ENCODE measurements at regions of chr3 and their contacts with region 1.

Region 1: GRCh38 chr3:136752422-136753325 is 496 bp upstream of the STAG1 start:
- DNase-seq: peak; percentile 91
- ATAC-seq: peak; percentile 91
- H3K4me3 ChIP-seq: peak overlapping the region; percentile 65 to 89
- H3K27ac ChIP-seq: peak overlapping the region; percentile 100
- H3K4me1 ChIP-seq: peaks cover 26% of the 10 kb centered on the region
- H3K27me3 ChIP-seq: no peaks in the 10 kb centered on the region
- CTCF ChIP-seq: no peak; the same call in none of the 2 replicates

Region 2: DNA sequence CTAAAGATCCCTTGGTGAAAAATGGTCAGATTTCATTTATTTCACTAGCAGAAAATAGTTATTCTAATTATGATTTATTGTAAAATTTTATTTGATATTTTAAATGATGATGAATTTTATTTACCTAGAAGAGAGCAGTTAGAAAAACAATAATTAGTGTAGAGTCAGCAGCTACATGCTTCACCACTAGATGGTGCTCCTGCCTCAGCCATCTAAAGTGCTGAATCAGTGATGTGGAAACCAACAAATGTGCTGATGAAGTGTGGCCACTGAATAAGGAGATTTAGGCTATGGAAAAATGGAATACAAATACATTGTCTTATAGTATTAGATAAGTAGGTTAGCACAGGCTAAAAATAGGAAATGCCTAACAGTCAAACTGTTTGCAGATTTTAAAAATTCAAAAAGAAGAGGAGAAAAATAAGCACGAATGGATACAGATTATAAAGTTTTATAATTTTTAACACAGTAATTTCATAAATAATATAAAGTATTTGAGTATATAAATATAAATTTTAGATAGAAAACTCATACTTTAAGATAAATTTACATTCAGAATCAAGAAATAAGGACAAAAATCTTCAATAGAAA is 677.4 kb before region 1 on chr3:
- CTCF ChIA-PET with region 1: interaction called, 3 read pairs
- POLR2A ChIA-PET with region 1: no interaction called
- in situ Hi-C with region 1: no loop called
- intact Hi-C with region 1: loop called (anchors 2 kb)
- DNase-seq: peak; percentile 69
- ATAC-seq: peak; percentile 79
- H3K4me3 ChIP-seq: no peak overlapping the region
- H3K27ac ChIP-seq: no peak overlapping the region
- H3K4me1 ChIP-seq: peaks cover 15% of the 10 kb centered on the region
- H3K27me3 ChIP-seq: no peaks in the 10 kb centered on the region
- CTCF ChIP-seq: peak; percentile 90; the same call in 1 of the 2 replicates

Region 3: GRCh38 chr3:136305878-136306277 is 446.8 kb before region 1 on chr3:
- CTCF ChIA-PET with region 1: interaction called, 12 read pairs
- POLR2A ChIA-PET with region 1: no interaction called
- in situ Hi-C with region 1: no loop called
- intact Hi-C with region 1: no loop called
- DNase-seq: peak; percentile 15
- ATAC-seq: no peak; the same call in 1 of the 2 replicates
- H3K4me3 ChIP-seq: no peak overlapping the region
- H3K27ac ChIP-seq: no peak overlapping the region
- H3K4me1 ChIP-seq: no peaks in the 10 kb centered on the region
- H3K27me3 ChIP-seq: no peaks in the 10 kb centered on the region
- CTCF ChIP-seq: no peak

Region 4: DNA sequence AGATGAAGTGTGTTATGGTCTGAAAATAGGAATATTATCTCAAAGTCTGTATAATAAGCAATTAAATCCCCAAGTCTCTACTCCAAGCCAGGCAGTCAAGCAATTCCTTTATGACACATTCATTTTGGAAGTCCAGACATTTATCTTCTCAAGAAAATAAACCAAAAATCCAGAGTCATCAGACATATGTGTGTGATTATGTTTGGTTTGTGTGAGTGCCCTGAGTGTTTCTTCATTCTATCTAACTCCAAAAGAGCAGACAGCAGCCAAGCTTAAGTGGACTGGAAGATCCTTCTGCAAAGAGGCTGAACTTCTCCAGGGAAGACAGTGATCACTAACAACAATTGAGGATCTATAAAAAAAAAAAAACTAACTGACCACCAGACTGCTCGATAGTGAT is 240.3 kb before region 1 on chr3:
- CTCF ChIA-PET with region 1: no interaction called
- POLR2A ChIA-PET with region 1: no interaction called
- in situ Hi-C with region 1: no loop called
- intact Hi-C with region 1: no loop called
- DNase-seq: no peak
- ATAC-seq: no peak
- H3K4me3 ChIP-seq: no peak overlapping the region
- H3K27ac ChIP-seq: no peak overlapping the region
- H3K4me1 ChIP-seq: no peaks in the 10 kb centered on the region
- H3K27me3 ChIP-seq: no peaks in the 10 kb centered on the region
- CTCF ChIP-seq: no peak

Region 5: DNA sequence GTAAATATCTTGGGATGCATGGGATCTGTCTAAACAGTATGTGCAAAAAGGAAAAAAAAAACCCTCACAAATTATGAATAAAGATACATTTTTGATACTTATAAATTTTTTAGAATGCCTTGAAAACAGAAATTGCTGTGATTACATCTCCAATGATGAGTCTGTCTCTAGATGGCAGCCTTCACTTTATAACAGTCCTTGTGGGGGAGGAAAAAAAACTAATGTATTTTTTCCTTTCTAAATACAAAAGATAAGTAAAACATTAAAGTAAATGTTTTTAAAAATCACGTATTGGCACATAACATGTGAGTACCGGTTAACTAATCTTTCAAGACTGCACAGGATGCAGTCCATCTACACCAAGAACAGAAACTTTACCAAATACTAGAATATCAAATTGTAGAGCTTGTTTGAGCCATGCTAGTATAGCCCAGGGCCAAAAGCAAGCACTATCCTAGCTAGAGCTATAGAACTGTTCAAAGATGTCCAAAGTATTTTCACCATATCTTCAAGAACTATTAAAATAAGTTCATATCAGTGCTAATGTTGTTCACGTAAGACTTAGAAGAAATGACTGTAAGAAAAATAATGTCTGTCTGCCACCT is 206.9 kb before region 1 on chr3:
- CTCF ChIA-PET with region 1: interaction called, 6 read pairs
- POLR2A ChIA-PET with region 1: no interaction called
- in situ Hi-C with region 1: no loop called
- intact Hi-C with region 1: loop called (anchors 10 kb)
- DNase-seq: no peak
- ATAC-seq: no peak
- H3K4me3 ChIP-seq: no peak overlapping the region
- H3K27ac ChIP-seq: no peak overlapping the region
- H3K4me1 ChIP-seq: no peaks in the 10 kb centered on the region
- H3K27me3 ChIP-seq: no peaks in the 10 kb centered on the region
- CTCF ChIP-seq: peak; percentile 39; the same call in 1 of the 2 replicates

Region 6: GRCh38 chr3:137013955-137014688 is 261.4 kb after region 1 on chr3:
- CTCF ChIA-PET with region 1: interaction called, 23 read pairs
- POLR2A ChIA-PET with region 1: no interaction called
- in situ Hi-C with region 1: no loop called
- intact Hi-C with region 1: no loop called
- DNase-seq: peak; percentile 83
- ATAC-seq: peak; percentile 97
- H3K4me3 ChIP-seq: peak overlapping the region; percentile 40 to 84
- H3K27ac ChIP-seq: peak overlapping the region; percentile 55
- H3K4me1 ChIP-seq: peaks cover 3% of the 10 kb centered on the region
- H3K27me3 ChIP-seq: no peaks in the 10 kb centered on the region
- CTCF ChIP-seq: peak; percentile 92

Region 7: DNA sequence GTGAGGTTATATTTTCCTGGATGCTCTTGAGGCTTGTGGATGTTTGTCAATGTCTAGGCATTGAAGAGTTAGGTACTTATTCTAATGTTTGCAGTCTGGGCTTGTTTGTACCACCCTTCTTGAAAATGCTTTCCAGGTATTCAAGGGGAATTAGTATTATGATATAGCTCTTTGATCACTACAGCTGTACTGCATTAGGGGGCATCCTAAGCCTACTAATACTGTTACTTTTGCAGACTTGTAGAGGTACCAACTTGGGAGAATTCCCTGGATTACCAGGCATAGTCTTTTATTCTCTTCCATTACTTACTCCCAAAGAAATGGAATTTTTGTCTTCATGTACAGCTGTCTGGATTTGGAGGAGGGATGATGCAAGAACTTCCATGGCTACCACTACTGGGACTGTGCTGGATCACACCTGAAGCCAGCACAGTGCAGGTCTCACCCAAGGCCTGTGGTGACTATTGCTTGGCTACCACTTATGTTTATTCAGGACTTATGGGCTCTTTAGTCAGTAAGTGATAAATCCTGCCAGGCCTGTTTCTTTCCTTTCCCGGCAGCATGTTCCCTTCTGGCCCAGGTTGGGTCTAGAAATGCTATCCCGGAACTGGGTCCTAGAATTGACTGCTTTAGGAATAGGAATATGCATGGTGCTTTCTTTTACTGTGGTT is 608.0 kb after region 1 on chr3:
- CTCF ChIA-PET with region 1: no interaction called
- POLR2A ChIA-PET with region 1: no interaction called
- in situ Hi-C with region 1: no loop called
- intact Hi-C with region 1: no loop called
- DNase-seq: no peak
- ATAC-seq: no peak
- H3K4me3 ChIP-seq: no peak overlapping the region
- H3K27ac ChIP-seq: no peak overlapping the region
- H3K4me1 ChIP-seq: no peaks in the 10 kb centered on the region
- H3K27me3 ChIP-seq: no peaks in the 10 kb centered on the region
- CTCF ChIP-seq: no peak